Stomach (tissue), 19 donors: ENCODE measurements at regions of chr15 and their contacts with region 1.

Region 1: GRCh38 chr15:42056934-42057779 is 36.3 kb upstream of the PLA2G4E start:
- DNase-seq: peak; percentile 84 to 92
- H3K4me3 ChIP-seq: peak overlapping the region; percentile 17 to 29 (median 24)
- H3K27ac ChIP-seq: peak overlapping the region; percentile 41 to 83 (median 62)
- H3K4me1 ChIP-seq: peaks cover 12 to 21% (median 14%) of the 10 kb centered on the region in 4 donors
- H3K27me3 ChIP-seq: peaks cover 0 to 12% (median 5%) of the 10 kb centered on the region in 3 donors
- CTCF ChIP-seq: peak in 5 of 7 experiments; percentile 11 to 47 (median 46)
- EP300 ChIP-seq: no peak
- POLR2A ChIP-seq: no peak

Region 2: DNA sequence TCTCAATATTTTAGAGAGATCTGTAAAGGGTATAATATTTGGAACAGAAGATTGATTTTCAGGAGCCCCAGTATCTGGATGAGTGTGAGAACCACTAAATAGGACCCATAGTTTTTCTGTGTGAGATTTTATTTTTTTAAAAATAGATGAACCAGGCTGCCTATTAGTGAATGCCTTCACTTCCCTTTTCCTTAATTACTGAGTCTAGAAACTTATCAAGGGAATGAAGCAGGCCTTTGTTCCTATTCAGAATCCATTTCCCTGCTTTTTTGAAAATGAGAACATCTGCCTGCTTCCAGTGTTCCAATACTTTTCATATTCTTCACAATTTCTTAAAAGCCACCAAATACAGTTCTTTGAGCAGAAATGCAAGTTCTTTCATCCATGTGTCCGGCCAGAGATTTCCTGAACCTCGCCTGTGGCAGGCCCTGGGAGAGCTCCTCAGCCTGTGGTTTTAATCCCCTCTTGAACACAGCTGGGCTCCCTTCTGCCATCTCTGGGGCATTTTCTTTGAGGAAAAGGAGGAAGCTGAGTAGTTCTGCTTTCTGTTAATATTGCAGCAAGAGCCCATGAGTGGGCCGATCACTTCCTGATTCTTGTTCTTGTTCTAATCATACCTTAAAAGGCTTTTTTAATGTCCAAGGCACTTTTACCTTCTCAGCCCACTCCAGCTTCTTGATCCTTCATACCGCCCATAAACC is 89.5 kb before region 1 on chr15:
- intact Hi-C with region 1: no loop called
- DNase-seq: peak; percentile 27 to 48
- H3K4me3 ChIP-seq: no peak overlapping the region
- H3K27ac ChIP-seq: peak overlapping the region; percentile 46 to 96 (median 71)
- H3K4me1 ChIP-seq: peaks cover 14 to 65% (median 52%) of the 10 kb centered on the region in 4 donors
- H3K27me3 ChIP-seq: no peaks in the 10 kb centered on the region
- CTCF ChIP-seq: no peak
- EP300 ChIP-seq: no peak
- POLR2A ChIP-seq: no peak

Region 3: GRCh38 chr15:41989259-41989933 is 67.8 kb before region 1 on chr15:
- intact Hi-C with region 1: loop called (anchors 5 kb)
- DNase-seq: peak; percentile 91 to 92
- H3K4me3 ChIP-seq: no peak overlapping the region
- H3K27ac ChIP-seq: no peak overlapping the region
- H3K4me1 ChIP-seq: no peaks in the 10 kb centered on the region
- H3K27me3 ChIP-seq: no peaks in the 10 kb centered on the region
- CTCF ChIP-seq: peak in 5 of 7 experiments; percentile 92 to 99 (median 99)
- EP300 ChIP-seq: no peak
- POLR2A ChIP-seq: no peak

Region 4: DNA sequence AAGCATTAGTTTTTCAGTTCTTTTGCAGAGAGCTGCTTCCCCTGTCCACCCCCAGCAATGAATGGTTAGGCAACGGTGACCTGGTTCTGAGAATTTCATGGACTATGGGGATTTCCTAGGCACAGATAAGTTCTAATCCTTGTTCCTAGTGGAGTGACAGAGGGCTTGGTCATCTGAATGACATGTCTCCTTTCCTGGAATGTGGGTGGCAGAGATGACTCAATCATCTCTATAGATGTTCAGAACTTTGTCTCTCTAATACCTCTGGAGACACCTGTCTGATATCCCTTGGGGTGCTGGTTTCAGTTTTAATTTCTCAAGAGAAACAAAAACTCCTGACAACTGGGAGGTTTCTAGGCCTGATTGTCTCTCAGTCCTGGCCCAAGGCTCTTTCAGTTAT is 46.7 kb before region 1 on chr15:
- intact Hi-C with region 1: no loop called
- DNase-seq: no peak
- H3K4me3 ChIP-seq: no peak overlapping the region
- H3K27ac ChIP-seq: no peak overlapping the region
- H3K4me1 ChIP-seq: peaks cover 0 to 13% (median 0%) of the 10 kb centered on the region in 4 donors
- H3K27me3 ChIP-seq: no peaks in the 10 kb centered on the region
- CTCF ChIP-seq: no peak
- EP300 ChIP-seq: no peak
- POLR2A ChIP-seq: no peak